AG04449 (cell line): ENCODE measurements at regions of chr9 and their contacts with region 1.

Region 1: DNA sequence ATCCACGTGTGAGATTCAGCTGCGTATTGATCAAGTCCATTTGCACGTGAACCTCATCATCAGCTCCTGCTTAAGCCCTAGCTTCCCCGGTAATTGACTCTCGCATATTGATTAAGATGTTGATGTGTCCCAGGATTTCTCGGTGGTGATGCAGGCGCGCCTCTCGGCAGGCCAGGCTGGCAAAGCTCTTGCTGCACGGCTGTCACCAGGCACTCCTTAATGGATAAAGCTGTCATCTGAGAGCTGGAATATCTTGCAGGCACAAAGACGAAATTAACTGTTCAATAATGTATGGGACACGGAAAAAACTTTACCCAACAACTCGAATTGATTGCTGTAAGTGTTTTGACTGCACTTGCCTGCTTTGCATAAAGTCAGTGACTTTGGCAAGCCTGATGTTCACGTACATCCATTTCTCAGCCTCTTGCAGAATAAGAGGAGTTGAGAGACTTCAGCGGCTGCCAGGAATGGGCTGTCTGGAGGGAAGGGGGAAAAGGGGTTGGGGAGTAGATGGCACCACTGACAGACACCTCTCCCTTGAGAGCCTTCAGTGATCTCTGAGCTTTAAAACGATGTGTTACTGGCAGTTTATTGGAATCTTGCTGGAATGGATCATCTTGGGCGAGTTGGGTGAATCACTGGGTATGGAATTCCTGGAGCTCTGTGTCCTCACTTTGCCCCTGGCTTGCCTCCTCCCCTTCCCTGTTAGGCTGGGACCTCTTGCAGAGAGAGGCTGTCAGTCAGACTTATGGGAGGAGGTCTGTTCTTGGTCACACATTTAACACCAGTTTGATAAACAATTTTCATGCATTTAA is 650.3 kb downstream of the CCDC171 start:
- DNase-seq: peak; percentile 88
- H3K4me3 ChIP-seq: no peak overlapping the region
- CTCF ChIP-seq: no peak

Region 2: DNA sequence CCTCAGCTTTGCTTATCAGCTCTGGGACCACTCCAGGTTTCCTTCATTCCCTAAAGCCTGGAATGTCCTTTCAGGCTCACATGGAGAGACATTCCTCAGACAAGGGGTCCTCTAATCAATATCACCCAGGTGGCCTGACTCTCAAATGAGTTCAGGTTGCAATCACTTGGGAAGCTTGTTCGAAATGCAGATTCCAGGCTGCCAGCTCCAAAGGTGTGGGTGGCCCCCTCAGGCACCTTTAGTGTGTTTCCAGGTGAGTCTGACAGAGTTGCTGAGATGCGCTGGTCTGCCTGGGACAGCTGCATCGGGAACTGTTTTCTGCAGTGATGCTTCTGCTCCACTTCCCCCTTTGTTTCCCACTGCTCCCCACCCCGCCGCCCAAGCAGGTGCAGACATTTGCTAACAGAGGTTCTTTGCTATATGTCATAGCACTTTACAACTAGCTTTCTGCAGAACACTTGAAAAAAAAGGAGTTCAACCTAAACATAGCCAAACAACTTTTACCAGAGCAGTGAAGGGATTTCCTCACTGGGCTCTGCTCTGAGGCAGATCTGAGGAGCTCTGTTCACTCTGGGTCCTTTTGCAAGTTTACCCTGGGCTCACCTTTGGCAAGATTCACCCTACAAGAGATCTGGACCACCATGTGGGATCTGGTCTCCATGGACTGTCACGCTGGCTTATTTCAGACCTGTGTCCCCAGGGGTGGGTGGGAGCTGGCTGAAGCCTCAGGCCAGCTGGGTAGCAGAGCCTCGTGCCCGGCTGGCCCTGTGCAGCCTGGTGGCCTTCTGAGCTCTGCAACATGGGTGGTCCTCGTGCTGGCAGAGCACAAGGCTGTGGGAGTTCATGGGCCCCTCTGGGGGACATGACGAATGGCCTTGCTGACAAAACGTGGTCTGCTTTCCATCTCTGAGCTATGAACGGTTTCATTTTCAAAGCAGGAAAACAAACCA is 110.7 kb before region 1 on chr9:
- CTCF ChIA-PET with region 1: no interaction called
- POLR2A ChIA-PET with region 1: no interaction called
- DNase-seq: no peak
- H3K4me3 ChIP-seq: no peak overlapping the region
- CTCF ChIP-seq: no peak

Region 3: DNA sequence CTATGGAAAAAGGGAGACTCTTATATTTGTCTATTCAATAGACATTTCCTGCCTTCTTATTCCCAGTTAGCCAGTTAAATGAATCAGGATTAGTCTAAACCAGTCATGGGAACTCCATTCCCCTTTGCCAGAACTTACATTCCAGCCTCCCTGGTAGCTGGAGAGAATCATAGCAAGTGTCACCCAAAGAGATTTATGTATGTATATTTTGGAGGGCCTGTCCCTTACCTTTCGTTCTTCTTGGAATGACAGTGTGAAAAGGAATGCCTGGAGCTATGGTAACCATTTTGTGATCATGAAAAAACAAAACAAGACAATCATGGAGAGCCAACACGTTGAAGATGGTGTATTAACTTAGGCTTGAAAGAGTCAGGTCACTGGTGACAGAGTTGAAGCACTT is 22.6 kb before region 1 on chr9:
- CTCF ChIA-PET with region 1: no interaction called
- POLR2A ChIA-PET with region 1: no interaction called
- DNase-seq: no peak
- H3K4me3 ChIP-seq: no peak overlapping the region
- CTCF ChIP-seq: no peak

Region 4: DNA sequence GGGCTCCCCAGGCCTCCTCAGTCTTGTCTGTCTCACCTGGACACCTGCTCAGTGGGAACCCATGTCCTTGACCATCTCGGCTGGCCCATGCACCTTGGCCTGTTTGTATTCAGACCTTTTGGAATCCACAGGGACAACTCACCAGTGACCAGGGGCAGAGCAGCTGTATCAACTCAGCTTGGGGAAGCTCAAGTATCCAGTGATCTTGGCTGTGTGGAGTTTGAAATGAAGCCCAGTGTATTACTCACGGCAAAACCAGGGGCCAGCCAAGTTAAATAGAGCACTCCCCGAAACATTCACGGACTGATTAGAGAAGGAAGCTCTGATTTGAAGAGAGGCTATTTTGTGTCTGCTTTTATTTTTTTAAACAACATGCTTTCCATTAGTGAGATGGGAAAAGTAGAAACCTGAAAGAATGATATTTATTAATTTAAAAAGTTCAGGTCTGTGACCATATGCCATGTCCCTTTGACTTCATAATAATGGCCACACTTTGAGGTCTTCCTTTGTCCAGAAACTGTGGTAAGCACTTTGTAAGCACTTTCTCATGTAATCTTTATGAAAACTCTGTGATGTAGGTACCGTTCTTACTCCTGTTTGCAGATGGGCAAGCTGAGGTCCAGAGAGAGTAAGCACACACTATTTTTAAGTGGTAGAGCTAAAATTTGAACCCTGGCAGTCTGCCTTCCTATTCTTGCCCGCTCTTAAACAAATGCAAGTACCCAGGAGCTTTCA is 10.8 kb after region 1 on chr9:
- CTCF ChIA-PET with region 1: interaction called, 3 read pairs
- POLR2A ChIA-PET with region 1: interaction called, 13 read pairs
- DNase-seq: peak; percentile 90
- H3K4me3 ChIP-seq: no peak overlapping the region
- CTCF ChIP-seq: no peak